Ovary (tissue), 10 donors: ENCODE measurements at regions of chr7 and their contacts with region 1.

Region 1: DNA sequence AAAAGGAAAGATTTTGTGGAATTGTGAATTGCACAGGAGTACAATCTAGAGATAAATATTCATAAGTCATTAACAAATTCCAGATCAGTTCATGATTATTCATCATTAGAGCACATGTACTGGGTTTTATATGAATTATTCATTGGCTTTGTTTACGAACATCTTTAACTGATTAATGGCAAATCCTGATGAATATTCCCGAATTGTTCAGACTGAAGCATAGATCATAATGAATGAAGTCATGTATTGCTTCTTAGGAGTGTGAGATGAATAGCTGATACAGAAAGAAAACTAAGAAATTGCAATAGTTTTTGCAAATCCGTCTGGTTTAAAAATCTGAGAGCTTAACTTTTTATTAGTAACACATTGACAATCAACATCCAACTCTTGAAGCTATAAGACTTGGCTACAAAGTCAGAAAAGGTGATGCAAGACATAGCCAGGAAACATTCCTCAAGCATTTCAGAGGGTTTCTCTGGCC is 183.6 kb upstream of the DGKB start:
- DNase-seq: no peak
- H3K4me3 ChIP-seq: no peak overlapping the region
- H3K27ac ChIP-seq: no peak overlapping the region
- H3K4me1 ChIP-seq: no peaks in the 10 kb centered on the region
- H3K27me3 ChIP-seq: no peaks in the 10 kb centered on the region
- CTCF ChIP-seq: no peak
- EP300 ChIP-seq: no peak
- POLR2A ChIP-seq: no peak

Region 2: DNA sequence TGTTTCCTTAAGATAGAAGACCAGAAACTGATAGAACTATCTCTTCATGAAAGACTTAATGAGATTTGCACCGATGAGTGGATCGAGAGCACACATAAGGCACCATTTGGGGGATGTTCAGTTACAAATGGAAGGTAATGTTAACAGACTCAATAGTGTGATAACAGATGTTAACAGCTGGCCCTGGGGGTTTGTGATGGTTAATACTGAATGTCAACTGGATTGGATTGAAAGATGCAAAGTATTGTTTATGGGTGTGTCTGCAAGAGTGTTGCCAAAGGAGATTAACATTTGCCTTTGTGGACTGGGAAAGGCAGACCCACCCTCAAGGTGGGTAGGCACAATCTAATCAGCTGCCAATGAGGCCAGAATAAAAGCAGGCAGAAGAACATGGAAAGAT is 53.1 kb before region 1 on chr7:
- intact Hi-C with region 1: loop called in 1 of 4 experiments (anchors 2 kb)
- DNase-seq: no peak
- H3K4me3 ChIP-seq: no peak overlapping the region
- H3K27ac ChIP-seq: no peak overlapping the region
- H3K4me1 ChIP-seq: no peaks in the 10 kb centered on the region
- H3K27me3 ChIP-seq: no peaks in the 10 kb centered on the region
- CTCF ChIP-seq: no peak
- EP300 ChIP-seq: no peak
- POLR2A ChIP-seq: no peak